Left ventricle myocardium inferior (tissue), 1 donor: ENCODE measurements at regions of chr18 and their contacts with region 1.

Region 1: DNA sequence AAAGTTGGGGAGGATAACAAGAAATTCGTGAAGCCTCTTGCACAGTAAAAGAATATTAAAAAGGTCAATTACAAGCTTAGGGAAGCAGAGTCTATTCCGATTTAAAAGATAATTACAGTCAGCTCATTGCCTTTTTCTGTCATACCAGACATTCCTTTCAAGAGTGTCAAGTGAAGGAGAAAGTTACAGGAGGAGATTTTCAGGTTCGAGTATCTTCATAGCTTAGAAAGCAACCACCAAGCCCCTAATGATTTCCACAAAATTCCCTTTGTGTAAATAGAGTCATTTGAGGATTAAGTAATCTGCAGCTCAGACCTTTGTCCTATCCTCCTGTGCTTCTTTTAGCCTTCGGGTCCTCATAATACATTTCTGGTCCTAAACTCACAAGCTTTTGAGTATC is 414.9 kb downstream of the CDH2 start:
- DNase-seq: no peak
- H3K4me3 ChIP-seq: no peak overlapping the region
- H3K27ac ChIP-seq: no peak overlapping the region
- H3K4me1 ChIP-seq: no peaks in the 10 kb centered on the region
- H3K27me3 ChIP-seq: no peaks in the 10 kb centered on the region
- CTCF ChIP-seq: no peak

Region 2: DNA sequence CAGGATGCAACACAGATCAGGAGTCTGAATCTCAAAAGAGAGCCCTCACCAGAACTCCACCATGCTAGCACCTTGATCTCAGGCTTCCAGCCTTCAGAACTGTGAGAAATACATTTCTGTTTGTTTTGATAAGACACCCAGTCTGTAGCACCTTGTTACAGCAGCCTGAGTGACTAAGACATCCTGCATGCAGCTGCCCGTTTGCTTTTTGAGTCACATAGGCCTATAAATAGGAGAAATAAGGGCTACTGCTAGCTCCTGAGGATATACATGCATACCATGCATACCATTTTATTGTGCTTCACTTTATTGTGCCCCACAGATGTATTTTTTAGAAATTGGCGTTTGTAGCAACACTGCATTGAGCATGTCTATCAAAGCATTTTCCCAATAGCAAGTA is 77.1 kb after region 1 on chr18:
- intact Hi-C with region 1: loop called (anchors 2 kb)
- DNase-seq: no peak
- H3K4me3 ChIP-seq: no peak overlapping the region
- H3K27ac ChIP-seq: no peak overlapping the region
- H3K4me1 ChIP-seq: no peaks in the 10 kb centered on the region
- H3K27me3 ChIP-seq: no peaks in the 10 kb centered on the region
- CTCF ChIP-seq: no peak